ENCODE measurements at regions of chr11 and their contacts with region 1.

Region 1: GRCh38 chr11:64846998-64847666 is 2.7 kb upstream of the CDC42BPG start:
- DNase-seq: peak; percentile 90
- ATAC-seq: peak; percentile 21
- H3K4me3 Mint-ChIP-seq: no peak overlapping the region
- H3K27ac Mint-ChIP-seq: peak overlapping the region; percentile 61
- H3K4me1 Mint-ChIP-seq: peaks cover 64% of the 10 kb centered on the region
- H3K27me3 Mint-ChIP-seq: no peaks in the 10 kb centered on the region
- CTCF ChIP-seq: peak; percentile 46

Region 2: GRCh38 chr11:64742889-64743590 is 104.1 kb before region 1 on chr11:
- CTCF ChIA-PET with region 1: interaction called, 16 read pairs
- POLR2A ChIA-PET with region 1: interaction called, 40 read pairs
- intact Hi-C with region 1: loop called (anchors 2 kb)
- DNase-seq: peak; percentile 89
- ATAC-seq: peak; percentile 12
- H3K4me3 Mint-ChIP-seq: peak overlapping the region; percentile 96
- H3K27ac Mint-ChIP-seq: no peak overlapping the region
- H3K4me1 Mint-ChIP-seq: peaks cover 43% of the 10 kb centered on the region
- H3K27me3 Mint-ChIP-seq: no peaks in the 10 kb centered on the region
- CTCF ChIP-seq: peak; percentile 85

Region 3: DNA sequence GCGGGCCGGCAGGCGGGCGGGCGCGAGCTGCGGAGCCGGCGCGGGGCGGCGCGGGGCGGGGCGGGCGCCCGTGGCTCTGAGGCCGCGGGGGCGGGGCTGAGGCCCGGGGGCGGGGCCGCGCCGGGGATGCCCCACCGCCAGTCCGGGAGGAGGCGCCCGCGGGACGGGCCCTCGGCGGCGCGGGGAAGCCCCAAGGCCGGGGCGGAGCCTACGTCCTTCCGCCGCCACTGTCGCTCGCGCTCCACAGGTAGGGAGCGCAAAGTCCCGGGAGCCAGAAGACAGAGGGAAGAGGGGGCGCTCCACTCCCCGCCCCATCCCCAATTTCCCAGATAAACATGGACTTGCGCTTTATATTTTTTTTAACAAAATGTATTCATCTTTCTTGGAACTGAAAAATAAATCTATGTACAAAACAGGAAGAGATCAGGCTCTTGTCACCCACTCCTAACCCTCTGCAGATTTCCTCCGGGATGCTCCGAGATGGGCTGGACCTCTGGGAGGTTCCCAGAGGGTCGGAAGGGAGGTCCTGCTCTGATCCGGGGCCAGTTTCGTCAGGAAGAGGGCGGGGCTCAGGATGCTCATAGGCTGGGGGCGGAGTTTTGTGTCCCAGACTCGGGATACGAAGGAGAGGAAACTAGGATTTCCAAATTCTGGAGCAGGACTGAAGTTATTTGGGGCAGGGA is 43.8 kb before region 1 on chr11 and contains the start of gene MAP4K2:
- CTCF ChIA-PET with region 1: interaction called, 5 read pairs
- POLR2A ChIA-PET with region 1: interaction called, 21 read pairs
- intact Hi-C with region 1: loop called (anchors 2 kb)
- DNase-seq: peak; percentile 91
- ATAC-seq: peak; percentile 80
- H3K4me3 Mint-ChIP-seq: peak within 1 kb of the TSS; percentile 87
- H3K27ac Mint-ChIP-seq: peak within 1 kb of the TSS; percentile 91
- H3K4me1 Mint-ChIP-seq: peaks cover 52% of the 10 kb centered on the region
- H3K27me3 Mint-ChIP-seq: no peaks in the 10 kb centered on the region
- CTCF ChIP-seq: no peak
- total RNA-seq, gene MAP4K2: 69.1 and 73.6 TPM in 2 replicates

Region 4: GRCh38 chr11:64834723-64835620 is 12.2 kb before region 1 on chr11:
- CTCF ChIA-PET with region 1: no interaction called
- POLR2A ChIA-PET with region 1: no interaction called
- intact Hi-C with region 1: no loop called
- DNase-seq: no peak
- ATAC-seq: no peak
- H3K4me3 Mint-ChIP-seq: no peak overlapping the region
- H3K27ac Mint-ChIP-seq: no peak overlapping the region
- H3K4me1 Mint-ChIP-seq: no peaks in the 10 kb centered on the region
- H3K27me3 Mint-ChIP-seq: no peaks in the 10 kb centered on the region
- CTCF ChIP-seq: no peak

Region 5: DNA sequence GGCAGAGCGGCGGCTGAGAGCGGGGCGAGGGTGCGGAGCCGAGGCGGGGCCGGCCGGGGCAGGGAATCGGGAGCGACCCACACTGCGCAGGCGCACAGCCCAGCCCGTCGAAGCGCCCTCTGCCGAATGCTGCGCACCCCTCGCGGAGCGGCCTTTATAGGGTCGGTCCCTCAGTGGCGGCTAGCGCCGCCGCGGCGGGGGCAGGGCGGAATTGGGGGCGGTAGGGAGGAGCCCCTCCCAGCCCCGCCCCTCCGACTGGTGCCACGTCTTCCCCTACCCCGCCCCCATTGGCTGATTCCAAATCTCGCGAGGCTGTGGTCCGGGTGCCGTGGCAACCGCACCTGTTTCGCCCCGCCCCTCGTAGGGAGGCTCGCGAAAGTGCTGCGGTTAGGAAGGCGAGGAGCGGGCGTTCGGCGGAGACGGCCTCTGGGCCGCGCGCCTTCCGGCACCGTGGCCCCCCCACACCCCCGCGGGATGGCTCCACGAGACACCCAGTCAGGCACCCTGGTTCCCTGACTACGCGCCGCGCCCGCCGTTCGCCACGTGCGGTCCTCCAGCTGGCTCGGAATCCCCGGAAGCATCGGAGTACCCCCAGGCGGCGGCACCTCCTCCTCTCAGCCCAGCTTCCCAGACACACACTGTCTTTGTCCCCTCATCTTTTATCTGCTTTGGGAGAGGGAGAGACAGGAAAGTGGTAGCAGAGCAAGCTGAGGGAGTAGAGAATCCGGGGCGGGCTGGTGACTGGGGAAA is 31.5 kb after region 1 on chr11 and contains the start of gene EHD1:
- CTCF ChIA-PET with region 1: interaction called, 163 read pairs
- POLR2A ChIA-PET with region 1: interaction called, 1,194 read pairs
- intact Hi-C with region 1: loop called (anchors 1 kb)
- DNase-seq: peak; percentile 98
- ATAC-seq: peak; percentile 81
- H3K4me3 Mint-ChIP-seq: peak within 1 kb of the TSS; percentile 97
- H3K27ac Mint-ChIP-seq: peak within 1 kb of the TSS; percentile 95
- H3K4me1 Mint-ChIP-seq: peaks cover 57% of the 10 kb centered on the region
- H3K27me3 Mint-ChIP-seq: no peaks in the 10 kb centered on the region
- CTCF ChIP-seq: no peak
- total RNA-seq, gene EHD1: 357 and 360 TPM in 2 replicates

Region 6: GRCh38 chr11:64916775-64917662 is 69.9 kb after region 1 on chr11 and contains the start of gene ATG2A:
- CTCF ChIA-PET with region 1: no interaction called
- POLR2A ChIA-PET with region 1: interaction called, 4 read pairs
- intact Hi-C with region 1: loop called (anchors 1 kb)
- DNase-seq: peak; percentile 97
- ATAC-seq: peak; percentile 98
- H3K4me3 Mint-ChIP-seq: peak within 1 kb of the TSS; percentile 88
- H3K27ac Mint-ChIP-seq: peak within 1 kb of the TSS; percentile 85
- H3K4me1 Mint-ChIP-seq: peaks cover 38% of the 10 kb centered on the region
- H3K27me3 Mint-ChIP-seq: no peaks in the 10 kb centered on the region
- CTCF ChIP-seq: no peak
- total RNA-seq, gene ATG2A: 31.2 and 35.0 TPM in 2 replicates

Region 7: GRCh38 chr11:64935359-64936081 is 88.4 kb after region 1 on chr11 and contains the start of gene GPHA2:
- CTCF ChIA-PET with region 1: no interaction called
- POLR2A ChIA-PET with region 1: no interaction called
- intact Hi-C with region 1: no loop called
- DNase-seq: no peak
- ATAC-seq: no peak
- H3K4me3 Mint-ChIP-seq: no peak within 1 kb of the TSS
- H3K27ac Mint-ChIP-seq: no peak within 1 kb of the TSS
- H3K4me1 Mint-ChIP-seq: no peaks in the 10 kb centered on the region
- H3K27me3 Mint-ChIP-seq: peaks cover 2% of the 10 kb centered on the region
- CTCF ChIP-seq: no peak
- total RNA-seq, gene GPHA2: 0.33 and 0.71 TPM in 2 replicates

Region 8: GRCh38 chr11:65111744-65112414 is 264.7 kb after region 1 on chr11 and contains the start of gene TM7SF2:
- CTCF ChIA-PET with region 1: interaction called, 8 read pairs
- POLR2A ChIA-PET with region 1: interaction called, 10 read pairs
- intact Hi-C with region 1: loop called (anchors 1 kb)
- DNase-seq: peak; percentile 90
- ATAC-seq: peak; percentile 78
- H3K4me3 Mint-ChIP-seq: peak within 1 kb of the TSS; percentile 89
- H3K27ac Mint-ChIP-seq: peak within 1 kb of the TSS; percentile 77
- H3K4me1 Mint-ChIP-seq: peaks cover 50% of the 10 kb centered on the region
- H3K27me3 Mint-ChIP-seq: no peaks in the 10 kb centered on the region
- CTCF ChIP-seq: no peak
- total RNA-seq, gene TM7SF2: 24.6 and 25.4 TPM in 2 replicates

Region 9: DNA sequence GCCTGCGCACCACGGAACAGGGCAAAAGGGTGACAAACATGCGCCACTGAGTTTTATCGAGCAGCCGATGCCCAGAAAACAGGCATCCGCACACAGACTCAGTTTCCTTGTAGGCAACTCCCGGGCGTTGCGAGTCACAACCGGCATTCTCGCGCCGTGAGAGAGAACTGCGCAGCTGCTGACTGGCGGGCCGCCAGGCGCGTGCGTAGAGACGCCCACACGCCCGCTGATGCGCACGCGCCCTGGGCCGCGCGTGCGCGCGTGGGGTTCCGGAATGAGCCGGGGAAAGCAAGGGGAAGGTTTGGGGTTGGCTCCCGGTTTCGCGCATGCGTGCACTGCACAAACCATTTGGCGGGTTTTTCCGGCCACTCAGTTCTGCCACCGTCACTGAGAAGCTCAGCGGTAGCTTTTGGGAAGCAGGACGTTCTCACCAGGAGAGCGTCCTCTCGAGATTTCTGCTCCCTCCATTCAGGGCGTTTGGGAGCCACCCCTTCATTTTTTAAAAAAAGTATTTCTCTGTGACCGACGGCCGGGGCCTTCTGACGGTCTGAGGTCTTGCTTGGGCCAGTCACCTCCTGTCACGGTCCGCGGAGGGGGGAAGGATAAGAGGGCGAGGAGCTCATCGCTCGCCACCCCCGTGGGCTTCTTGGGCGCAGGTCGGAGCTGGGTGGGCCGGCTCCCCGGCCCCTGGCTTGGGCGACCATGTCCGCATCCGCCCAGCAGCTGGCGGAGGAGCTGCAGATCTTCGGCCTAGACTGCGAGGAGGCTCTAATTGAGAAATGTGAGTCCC is 414.7 kb after region 1 on chr11 and contains the start of gene POLA2:
- CTCF ChIA-PET with region 1: no interaction called
- POLR2A ChIA-PET with region 1: interaction called, 5 read pairs
- intact Hi-C with region 1: loop called (anchors 10 kb)
- DNase-seq: peak; percentile 98
- ATAC-seq: peak; percentile 83
- H3K4me3 Mint-ChIP-seq: peak within 1 kb of the TSS; percentile 90
- H3K27ac Mint-ChIP-seq: peak within 1 kb of the TSS; percentile 91
- H3K4me1 Mint-ChIP-seq: peaks cover 27% of the 10 kb centered on the region
- H3K27me3 Mint-ChIP-seq: no peaks in the 10 kb centered on the region
- CTCF ChIP-seq: no peak
- total RNA-seq, gene POLA2: 37.1 and 43.4 TPM in 2 replicates

Measured in activated B cell treated with CpG ODN at 0.5 μM for 24 hours (primary cell).